Esophagus muscularis mucosa (tissue), 4 donors: ENCODE measurements at regions of chr2 and their contacts with region 1.

Region 1: DNA sequence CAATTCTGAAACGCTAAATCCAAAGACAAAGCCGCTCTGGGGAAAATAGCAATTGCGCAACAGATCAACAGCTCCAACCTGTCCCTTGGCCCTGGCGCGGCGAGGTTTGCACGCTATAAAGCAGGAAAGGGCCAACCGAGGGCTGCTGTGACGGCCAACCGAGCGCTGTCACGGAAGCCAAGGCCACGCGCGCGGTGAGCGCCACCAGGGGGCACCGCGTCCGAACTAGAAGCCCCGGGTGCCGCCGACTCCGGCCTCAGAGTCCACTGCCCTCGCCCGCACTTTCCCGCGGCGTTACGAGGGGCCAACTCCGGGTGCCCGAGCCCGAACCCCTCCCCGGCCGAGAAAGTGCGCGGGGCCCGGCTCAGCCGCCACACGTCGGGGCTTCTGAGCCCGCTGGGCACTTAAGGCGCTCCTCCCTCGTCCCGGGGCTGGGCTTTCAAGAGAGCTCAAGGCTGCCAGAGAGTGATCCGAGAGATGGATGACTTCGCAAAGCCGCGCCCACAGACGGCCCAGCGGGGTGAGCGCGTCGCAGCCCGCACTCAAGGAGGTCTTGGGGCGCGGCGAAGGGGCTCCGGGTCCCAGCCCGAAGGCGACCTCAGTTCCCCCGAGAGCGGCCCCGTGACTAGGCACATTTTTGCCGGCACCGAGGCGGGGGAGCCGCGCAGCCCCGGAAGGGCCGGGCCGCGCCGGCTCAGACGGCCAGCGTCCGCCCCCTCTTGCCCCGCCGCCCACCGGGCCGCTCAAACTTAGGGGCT is 897 bp downstream of the NFE2L2 start:
- DNase-seq: peak; percentile 99
- H3K4me3 ChIP-seq: peak overlapping the region; percentile 92 to 100 (median 96)
- H3K27ac ChIP-seq: peak overlapping the region; percentile 99 to 100 (median 100)
- H3K4me1 ChIP-seq: peaks cover 40 to 55% (median 51%) of the 10 kb centered on the region in 4 donors
- H3K27me3 ChIP-seq: no peaks in the 10 kb centered on the region
- CTCF ChIP-seq: peak; percentile 78 to 92 (median 83)
- EP300 ChIP-seq: peak; percentile 72
- POLR2A ChIP-seq: peak; percentile 44

Region 2: GRCh38 chr2:176947754-176948153 is 315.9 kb before region 1 on chr2:
- intact Hi-C with region 1: no loop called
- DNase-seq: no peak
- H3K4me3 ChIP-seq: no peak overlapping the region
- H3K27ac ChIP-seq: no peak overlapping the region
- H3K4me1 ChIP-seq: no peaks in the 10 kb centered on the region
- H3K27me3 ChIP-seq: no peaks in the 10 kb centered on the region
- CTCF ChIP-seq: no peak
- EP300 ChIP-seq: no peak
- POLR2A ChIP-seq: no peak

Region 3: GRCh38 chr2:177195194-177195593 is 68.4 kb before region 1 on chr2:
- intact Hi-C with region 1: no loop called
- DNase-seq: no peak
- H3K4me3 ChIP-seq: no peak overlapping the region
- H3K27ac ChIP-seq: no peak overlapping the region
- H3K4me1 ChIP-seq: peaks cover 0 to 31% (median 20%) of the 10 kb centered on the region in 4 donors
- H3K27me3 ChIP-seq: no peaks in the 10 kb centered on the region
- CTCF ChIP-seq: no peak
- EP300 ChIP-seq: no peak
- POLR2A ChIP-seq: no peak

Region 4: GRCh38 chr2:177212106-177212890 is 51.3 kb before region 1 on chr2 and contains the start of gene HNRNPA3:
- intact Hi-C with region 1: loop called (anchors 1 kb)
- DNase-seq: peak; percentile 100
- H3K4me3 ChIP-seq: peak within 1 kb of the TSS; percentile 84 to 91 (median 90)
- H3K27ac ChIP-seq: peak within 1 kb of the TSS; percentile 99 to 100 (median 99)
- H3K4me1 ChIP-seq: peaks cover 39 to 53% (median 50%) of the 10 kb centered on the region in 4 donors
- H3K27me3 ChIP-seq: no peaks in the 10 kb centered on the region
- CTCF ChIP-seq: peak; percentile 15 to 41 (median 24)
- EP300 ChIP-seq: peak; percentile 65
- POLR2A ChIP-seq: peak; percentile 85
- total RNA-seq, gene HNRNPA3: 59.2 to 72.3 (median 64.3) TPM

Region 5: DNA sequence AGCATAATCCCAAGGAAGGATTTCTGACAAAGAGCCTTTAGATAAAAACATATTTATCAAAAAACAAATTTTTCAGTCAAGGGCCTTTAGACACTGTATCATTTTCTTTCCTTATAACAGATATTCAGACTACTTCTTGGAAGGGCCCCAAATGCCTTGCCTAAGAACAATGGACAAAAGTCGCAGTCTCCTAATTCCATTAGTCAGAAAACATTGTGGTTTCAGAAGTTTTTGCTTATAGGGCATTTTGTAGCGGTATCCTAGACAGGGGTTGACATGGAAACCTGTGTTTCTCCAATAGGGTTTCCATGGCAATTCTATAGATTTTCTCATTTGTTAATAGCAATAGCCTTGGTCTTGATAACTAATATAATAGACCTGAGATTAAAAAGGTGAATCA is 92.2 kb after region 1 on chr2:
- intact Hi-C with region 1: no loop called
- DNase-seq: no peak
- H3K4me3 ChIP-seq: no peak overlapping the region
- H3K27ac ChIP-seq: no peak overlapping the region
- H3K4me1 ChIP-seq: peaks cover 15 to 35% (median 34%) of the 10 kb centered on the region in 4 donors
- H3K27me3 ChIP-seq: no peaks in the 10 kb centered on the region
- CTCF ChIP-seq: no peak
- EP300 ChIP-seq: no peak
- POLR2A ChIP-seq: no peak